MCF 10A (cell line): ENCODE measurements at regions of chr21 and their contacts with region 1.

Region 1: DNA sequence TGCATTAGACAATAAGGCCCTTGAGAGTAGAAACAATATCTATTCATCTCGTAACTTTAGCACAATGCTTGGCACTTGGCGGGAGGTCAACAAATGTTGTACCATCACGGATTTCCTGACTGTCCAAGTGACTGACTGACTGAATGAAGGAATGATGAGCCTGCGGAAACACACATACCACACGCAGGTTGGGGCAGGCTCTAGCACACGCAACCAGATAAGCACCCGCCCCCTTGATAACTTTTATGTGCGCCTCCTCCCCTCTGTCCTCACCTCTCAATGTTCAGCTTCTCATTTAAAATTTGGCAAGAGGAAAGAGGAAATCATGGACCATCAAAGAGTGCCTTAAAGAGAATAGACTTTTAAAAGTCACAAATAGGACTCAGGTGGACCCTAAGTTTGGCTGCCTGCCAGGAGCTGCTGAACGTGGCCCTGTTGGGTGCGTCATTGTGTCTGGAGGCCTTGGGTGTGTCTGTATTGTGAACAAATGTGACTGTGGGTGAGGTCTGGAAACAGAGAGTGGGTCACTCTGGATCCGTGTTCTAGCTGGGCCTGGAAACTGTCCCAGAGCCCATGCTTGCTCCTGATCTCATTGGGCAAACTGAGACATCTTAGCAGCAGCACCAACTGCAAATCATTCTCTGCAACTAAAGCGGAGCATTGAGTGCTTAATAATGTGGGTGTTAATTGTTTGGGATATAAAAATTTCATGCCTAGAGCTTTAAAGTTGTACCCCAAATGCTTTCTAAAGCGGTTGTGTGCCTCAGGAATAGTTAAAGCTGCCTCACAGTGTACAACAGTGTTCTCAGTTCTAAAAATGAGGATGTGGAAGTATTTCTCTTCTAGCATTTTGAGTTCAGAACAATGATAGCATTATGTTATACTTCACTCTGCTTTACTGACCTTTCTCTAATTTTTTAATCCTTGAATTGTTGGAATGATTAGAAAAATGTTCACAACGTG is 47.6 kb upstream of the ABCG1 start:
- DNase-seq: peak; percentile 88
- H3K4me3 Mint-ChIP-seq: peak overlapping the region; percentile 33
- H3K27ac Mint-ChIP-seq: peak overlapping the region; percentile 90
- H3K4me1 Mint-ChIP-seq: peaks cover 23% of the 10 kb centered on the region
- H3K27me3 Mint-ChIP-seq: no peaks in the 10 kb centered on the region
- CTCF ChIP-seq: no peak

Region 2: DNA sequence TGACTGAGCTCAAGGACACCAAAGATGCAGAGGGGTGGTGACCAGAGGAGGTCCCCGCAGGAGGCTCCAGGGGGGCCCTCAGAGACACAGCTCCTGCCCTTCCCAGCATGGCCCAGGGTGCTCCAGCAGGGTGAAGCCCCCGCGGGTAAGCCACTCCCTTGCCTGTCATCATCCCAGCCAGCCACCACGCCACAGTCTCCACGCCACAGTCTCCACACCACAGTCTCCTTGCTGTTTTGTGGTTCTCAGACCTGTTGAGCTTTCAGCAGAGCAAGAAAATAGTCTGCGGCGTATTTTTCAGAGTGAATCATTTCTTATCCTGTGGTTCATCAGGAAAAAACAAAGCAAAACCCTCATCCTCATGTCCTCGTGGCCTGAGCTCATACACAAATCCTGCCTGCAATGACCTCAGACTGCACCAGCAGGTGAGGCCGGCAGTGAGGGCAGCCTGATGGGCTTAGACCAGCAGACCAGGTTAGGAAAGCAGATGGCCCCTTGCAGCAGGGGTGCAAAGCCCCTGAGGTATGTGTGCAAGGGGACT is 21.8 kb after region 1 on chr21:
- CTCF ChIA-PET with region 1: interaction called, 6 read pairs
- POLR2A ChIA-PET with region 1: interaction called, 14 read pairs
- intact Hi-C with region 1: loop called (anchors 2 kb)
- DNase-seq: no peak
- H3K4me3 Mint-ChIP-seq: no peak overlapping the region
- H3K27ac Mint-ChIP-seq: no peak overlapping the region
- H3K4me1 Mint-ChIP-seq: peaks cover 44% of the 10 kb centered on the region
- H3K27me3 Mint-ChIP-seq: no peaks in the 10 kb centered on the region
- CTCF ChIP-seq: no peak

Region 3: GRCh38 chr21:42199488-42200458 is 28.4 kb after region 1 on chr21:
- CTCF ChIA-PET with region 1: no interaction called
- POLR2A ChIA-PET with region 1: interaction called, 21 read pairs
- intact Hi-C with region 1: loop called (anchors 2 kb)
- DNase-seq: peak; percentile 85
- H3K4me3 Mint-ChIP-seq: no peak overlapping the region
- H3K27ac Mint-ChIP-seq: peak overlapping the region; percentile 43
- H3K4me1 Mint-ChIP-seq: peaks cover 36% of the 10 kb centered on the region
- H3K27me3 Mint-ChIP-seq: no peaks in the 10 kb centered on the region
- CTCF ChIP-seq: no peak

Region 4: GRCh38 chr21:42220138-42220701 is 48.8 kb after region 1 on chr21:
- CTCF ChIA-PET with region 1: no interaction called
- POLR2A ChIA-PET with region 1: interaction called, 42 read pairs
- intact Hi-C with region 1: loop called (anchors 1 kb)
- DNase-seq: peak; percentile 67
- H3K4me3 Mint-ChIP-seq: peak overlapping the region; percentile 90
- H3K27ac Mint-ChIP-seq: peak overlapping the region; percentile 81
- H3K4me1 Mint-ChIP-seq: peaks cover 21% of the 10 kb centered on the region
- H3K27me3 Mint-ChIP-seq: no peaks in the 10 kb centered on the region
- CTCF ChIP-seq: no peak

Region 5: GRCh38 chr21:42227909-42228708 is 56.7 kb after region 1 on chr21:
- CTCF ChIA-PET with region 1: no interaction called
- POLR2A ChIA-PET with region 1: interaction called, 10 read pairs
- intact Hi-C with region 1: loop called (anchors 2 kb)
- DNase-seq: peak; percentile 96
- H3K4me3 Mint-ChIP-seq: no peak overlapping the region
- H3K27ac Mint-ChIP-seq: peak overlapping the region; percentile 50
- H3K4me1 Mint-ChIP-seq: peaks cover 35% of the 10 kb centered on the region
- H3K27me3 Mint-ChIP-seq: no peaks in the 10 kb centered on the region
- CTCF ChIP-seq: no peak

Region 6: GRCh38 chr21:42233067-42233961 is 61.9 kb after region 1 on chr21:
- CTCF ChIA-PET with region 1: interaction called, 4 read pairs
- POLR2A ChIA-PET with region 1: interaction called, 15 read pairs
- intact Hi-C with region 1: loop called (anchors 2 kb)
- DNase-seq: no peak
- H3K4me3 Mint-ChIP-seq: peak overlapping the region; percentile 47
- H3K27ac Mint-ChIP-seq: no peak overlapping the region
- H3K4me1 Mint-ChIP-seq: peaks cover 25% of the 10 kb centered on the region
- H3K27me3 Mint-ChIP-seq: no peaks in the 10 kb centered on the region
- CTCF ChIP-seq: no peak

Region 7: GRCh38 chr21:42366321-42367009 is 195.1 kb after region 1 on chr21 and contains the start of gene TFF1:
- CTCF ChIA-PET with region 1: no interaction called
- POLR2A ChIA-PET with region 1: no interaction called
- intact Hi-C with region 1: no loop called
- DNase-seq: peak; percentile 25
- H3K4me3 Mint-ChIP-seq: no peak within 1 kb of the TSS
- H3K27ac Mint-ChIP-seq: no peak within 1 kb of the TSS
- H3K4me1 Mint-ChIP-seq: no peaks in the 10 kb centered on the region
- H3K27me3 Mint-ChIP-seq: peaks cover 32% of the 10 kb centered on the region
- CTCF ChIP-seq: no peak
- total RNA-seq, gene TFF1: not detected in 2 replicates